Activated CD4-positive, alpha-beta memory T cell treated with anti-CD3 and anti-CD28 coated beads for 36 hours (primary cell): ENCODE measurements at regions of chr6 and their contacts with region 1.

Region 1: GRCh38 chr6:399785-400534 is 8.4 kb downstream of the IRF4 start:
- DNase-seq: peak; percentile 76
- H3K4me3 Mint-ChIP-seq: peak overlapping the region; percentile 64
- H3K27ac Mint-ChIP-seq: peak overlapping the region; percentile 88
- H3K4me1 Mint-ChIP-seq: peaks cover 94% of the 10 kb centered on the region
- H3K27me3 Mint-ChIP-seq: no peaks in the 10 kb centered on the region

Region 2: GRCh38 chr6:280775-281468 is 119.0 kb before region 1 on chr6:
- CTCF ChIA-PET with region 1: no interaction called
- POLR2A ChIA-PET with region 1: no interaction called
- intact Hi-C with region 1: no loop called
- DNase-seq: no peak
- H3K4me3 Mint-ChIP-seq: no peak overlapping the region
- H3K27ac Mint-ChIP-seq: no peak overlapping the region
- H3K4me1 Mint-ChIP-seq: peaks cover 6% of the 10 kb centered on the region
- H3K27me3 Mint-ChIP-seq: no peaks in the 10 kb centered on the region

Region 3: DNA sequence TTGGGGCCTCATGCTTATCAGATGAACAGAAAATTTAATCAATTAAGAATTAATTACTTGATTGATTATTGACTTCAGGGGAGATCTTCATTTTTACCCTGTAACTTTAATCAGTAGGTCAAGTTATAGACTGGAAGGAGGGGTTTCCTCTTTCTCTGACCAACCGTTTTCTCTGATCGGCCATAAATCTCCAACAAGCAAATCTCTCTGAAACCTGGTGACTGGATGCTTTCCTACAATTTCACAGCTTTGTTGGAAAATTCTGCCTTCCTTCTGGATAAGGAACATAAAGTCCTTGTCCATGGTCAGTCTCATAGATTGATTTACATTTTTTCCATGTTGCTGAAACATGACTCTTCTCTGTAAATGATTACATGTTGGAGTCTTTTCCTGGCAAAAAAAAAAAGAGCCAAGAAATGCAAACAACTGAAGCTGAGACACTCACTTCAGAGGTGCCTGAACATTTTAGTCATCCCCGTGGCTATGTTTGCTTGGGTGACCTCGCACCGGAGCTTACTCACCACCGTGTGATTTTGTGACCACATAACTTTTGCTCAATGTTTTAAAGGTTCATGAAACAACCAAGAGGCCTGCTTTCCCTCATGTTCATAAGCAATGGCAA is 22.6 kb after region 1 on chr6:
- CTCF ChIA-PET with region 1: no interaction called
- POLR2A ChIA-PET with region 1: no interaction called
- intact Hi-C with region 1: loop called (anchors 1 kb)
- DNase-seq: peak; percentile 87
- H3K4me3 Mint-ChIP-seq: no peak overlapping the region
- H3K27ac Mint-ChIP-seq: peak overlapping the region; percentile 87
- H3K4me1 Mint-ChIP-seq: peaks cover 30% of the 10 kb centered on the region
- H3K27me3 Mint-ChIP-seq: no peaks in the 10 kb centered on the region

Region 4: DNA sequence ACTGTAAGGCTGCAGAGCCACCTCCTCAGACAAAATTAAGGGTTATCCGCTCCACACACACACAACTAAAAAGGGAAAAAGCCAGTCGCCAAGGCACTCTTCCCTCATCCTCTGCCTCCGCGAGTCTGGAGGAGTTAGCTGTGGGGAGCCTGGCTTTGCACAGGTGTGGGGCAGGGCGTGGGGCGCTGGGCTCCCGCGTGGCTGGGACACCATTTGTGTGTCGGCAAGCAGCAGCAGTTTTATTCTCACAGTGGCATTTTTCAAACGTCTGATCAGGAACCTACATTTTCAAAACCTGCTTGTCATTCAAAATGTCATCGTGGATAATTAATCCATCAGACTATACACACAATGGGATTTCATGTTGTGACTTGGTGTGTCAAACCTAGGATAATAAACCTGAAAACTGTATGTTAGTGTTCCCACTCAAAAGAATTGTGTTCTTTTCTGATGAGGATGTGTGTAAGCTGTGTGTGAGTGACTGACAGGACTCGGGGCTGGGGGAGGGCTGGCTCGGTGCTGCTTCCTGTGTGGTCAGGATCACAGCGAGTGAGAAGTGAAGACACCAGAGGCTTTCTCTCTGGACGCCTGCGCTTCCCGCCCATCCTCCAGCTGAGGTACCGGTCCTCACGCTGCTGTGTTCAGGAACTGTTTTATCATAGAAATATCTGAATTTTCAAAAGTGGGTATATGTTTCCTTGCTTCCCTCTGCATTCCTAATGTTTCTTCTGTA is 74.7 kb after region 1 on chr6:
- CTCF ChIA-PET with region 1: no interaction called
- POLR2A ChIA-PET with region 1: interaction called, 11 read pairs
- intact Hi-C with region 1: no loop called
- DNase-seq: peak; percentile 92
- H3K4me3 Mint-ChIP-seq: peak overlapping the region; percentile 44
- H3K27ac Mint-ChIP-seq: peak overlapping the region; percentile 83
- H3K4me1 Mint-ChIP-seq: peaks cover 74% of the 10 kb centered on the region
- H3K27me3 Mint-ChIP-seq: peaks cover 4% of the 10 kb centered on the region

Region 5: DNA sequence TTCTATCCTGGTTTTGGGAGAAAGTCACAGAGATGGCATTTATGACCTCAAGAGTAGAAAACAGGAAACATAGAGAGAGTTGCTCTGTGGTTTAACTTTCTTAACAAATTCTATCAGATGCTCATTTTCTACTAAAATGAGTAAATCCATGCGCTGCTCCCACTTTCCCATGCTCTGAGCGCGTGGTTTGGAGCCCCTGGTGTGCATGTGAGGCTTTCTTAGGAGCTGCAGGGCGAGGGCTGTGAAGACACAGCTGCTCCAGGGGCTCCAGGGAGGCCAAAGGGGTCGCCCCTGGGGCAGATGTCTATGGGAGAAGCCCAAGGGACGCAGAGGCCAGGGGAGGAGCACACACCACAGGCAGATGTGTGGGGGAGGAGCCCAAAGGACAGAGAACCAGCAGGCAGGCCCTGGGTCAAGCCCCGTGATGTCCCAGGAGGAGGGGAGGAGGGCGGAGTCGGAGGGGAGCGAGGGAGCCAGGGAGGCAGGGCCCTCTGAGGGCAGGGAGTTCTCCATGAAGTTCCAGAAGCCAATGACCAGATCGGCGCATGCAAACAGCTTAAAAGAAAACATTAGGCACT is 114.5 kb after region 1 on chr6:
- CTCF ChIA-PET with region 1: no interaction called
- POLR2A ChIA-PET with region 1: interaction called, 13 read pairs
- intact Hi-C with region 1: no loop called
- DNase-seq: peak; percentile 60
- H3K4me3 Mint-ChIP-seq: peak overlapping the region; percentile 17
- H3K27ac Mint-ChIP-seq: peak overlapping the region; percentile 85
- H3K4me1 Mint-ChIP-seq: peaks cover 64% of the 10 kb centered on the region
- H3K27me3 Mint-ChIP-seq: no peaks in the 10 kb centered on the region

Region 6: GRCh38 chr6:650098-650497 is 250.1 kb after region 1 on chr6:
- CTCF ChIA-PET with region 1: no interaction called
- POLR2A ChIA-PET with region 1: no interaction called
- intact Hi-C with region 1: no loop called
- DNase-seq: no peak
- H3K4me3 Mint-ChIP-seq: no peak overlapping the region
- H3K27ac Mint-ChIP-seq: no peak overlapping the region
- H3K4me1 Mint-ChIP-seq: peaks cover 40% of the 10 kb centered on the region
- H3K27me3 Mint-ChIP-seq: no peaks in the 10 kb centered on the region

Region 7: DNA sequence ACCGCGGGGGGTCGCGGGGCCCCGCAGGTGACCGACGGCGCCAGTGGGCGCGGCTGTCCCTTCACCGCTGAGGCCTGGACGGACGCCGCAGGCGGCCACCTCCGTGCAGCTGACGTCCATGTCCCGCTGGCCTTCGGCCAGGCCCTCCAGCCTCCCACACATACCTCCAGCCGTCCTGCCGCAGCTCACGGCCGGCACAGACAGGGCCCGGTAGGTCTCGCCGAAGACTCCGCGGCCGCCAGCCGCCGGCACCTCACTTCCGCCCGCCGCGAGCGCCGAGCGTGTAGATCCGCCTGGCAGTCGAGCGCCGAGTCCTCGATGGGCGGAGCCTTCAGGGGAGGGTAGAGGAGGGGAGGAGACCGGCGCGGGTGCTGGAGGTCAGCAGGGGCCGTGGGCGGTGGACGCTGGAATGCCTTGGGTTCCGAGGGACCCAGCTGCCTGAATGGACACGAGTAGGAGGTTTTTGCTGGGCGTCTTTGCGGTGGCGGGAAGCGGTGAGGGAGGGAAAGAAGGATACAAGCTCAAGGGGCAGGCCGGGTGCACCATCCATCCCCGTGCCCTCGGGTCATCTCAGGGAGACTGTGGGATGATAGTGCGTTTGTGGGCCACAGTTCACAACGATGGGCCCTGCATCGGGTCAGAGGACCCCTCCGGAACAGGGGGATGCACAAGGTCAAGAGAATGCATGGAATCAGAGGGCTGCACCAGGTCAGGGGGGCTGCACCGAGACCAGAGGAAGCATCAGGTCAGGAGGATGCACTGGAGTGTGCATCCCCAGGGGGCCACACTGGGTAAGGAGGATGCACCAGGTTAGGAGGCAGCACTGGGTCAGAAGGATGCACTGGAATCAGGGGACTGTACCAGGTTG is 293.1 kb after region 1 on chr6 and contains the start of gene EXOC2:
- CTCF ChIA-PET with region 1: no interaction called
- POLR2A ChIA-PET with region 1: no interaction called
- intact Hi-C with region 1: no loop called
- DNase-seq: peak; percentile 92
- H3K4me3 Mint-ChIP-seq: peak within 1 kb of the TSS; percentile 95
- H3K27ac Mint-ChIP-seq: peak within 1 kb of the TSS; percentile 85
- H3K4me1 Mint-ChIP-seq: peaks cover 33% of the 10 kb centered on the region
- H3K27me3 Mint-ChIP-seq: no peaks in the 10 kb centered on the region
- total RNA-seq, gene EXOC2: 40.5 to 42.3 TPM